Lower leg skin (tissue), 4 donors: ENCODE measurements at regions of chr11 and their contacts with region 1.

Region 1: DNA sequence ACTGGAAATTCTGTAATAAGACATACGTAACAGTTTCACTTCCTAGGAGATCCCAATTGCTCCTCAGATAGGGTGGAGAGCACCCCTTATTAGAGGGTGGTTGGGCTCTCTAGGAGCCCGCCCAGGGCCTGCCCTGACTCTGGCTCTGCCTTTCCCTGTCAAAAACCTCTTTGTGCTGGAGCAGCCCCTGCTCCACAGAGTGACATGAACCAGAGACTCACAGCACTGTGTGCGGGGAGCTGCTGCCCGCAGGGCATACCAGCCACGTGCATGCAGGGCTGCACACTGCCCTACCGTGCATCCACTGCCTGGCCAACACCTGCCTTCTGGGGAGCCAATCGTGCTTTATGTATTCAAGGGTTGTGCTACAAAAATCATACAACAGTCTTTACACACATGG is 24.3 kb downstream of the KCNQ1OT1 start:
- DNase-seq: peak in 1 of 2 donors; percentile 72
- H3K4me3 ChIP-seq: no peak overlapping the region
- CTCF ChIP-seq: no peak
- POLR2A ChIP-seq: no peak

Region 2: GRCh38 chr11:2549876-2550620 is 125.5 kb before region 1 on chr11:
- intact Hi-C with region 1: loop called (anchors 10 kb)
- DNase-seq: no peak
- H3K4me3 ChIP-seq: no peak overlapping the region
- CTCF ChIP-seq: no peak
- POLR2A ChIP-seq: no peak

Region 3: GRCh38 chr11:2867722-2868505 is 192.4 kb after region 1 on chr11:
- intact Hi-C with region 1: no loop called
- DNase-seq: no peak
- H3K4me3 ChIP-seq: no peak overlapping the region
- CTCF ChIP-seq: no peak
- POLR2A ChIP-seq: no peak